ENCODE measurements at regions of chr19 and their contacts with region 1.

Region 1: DNA sequence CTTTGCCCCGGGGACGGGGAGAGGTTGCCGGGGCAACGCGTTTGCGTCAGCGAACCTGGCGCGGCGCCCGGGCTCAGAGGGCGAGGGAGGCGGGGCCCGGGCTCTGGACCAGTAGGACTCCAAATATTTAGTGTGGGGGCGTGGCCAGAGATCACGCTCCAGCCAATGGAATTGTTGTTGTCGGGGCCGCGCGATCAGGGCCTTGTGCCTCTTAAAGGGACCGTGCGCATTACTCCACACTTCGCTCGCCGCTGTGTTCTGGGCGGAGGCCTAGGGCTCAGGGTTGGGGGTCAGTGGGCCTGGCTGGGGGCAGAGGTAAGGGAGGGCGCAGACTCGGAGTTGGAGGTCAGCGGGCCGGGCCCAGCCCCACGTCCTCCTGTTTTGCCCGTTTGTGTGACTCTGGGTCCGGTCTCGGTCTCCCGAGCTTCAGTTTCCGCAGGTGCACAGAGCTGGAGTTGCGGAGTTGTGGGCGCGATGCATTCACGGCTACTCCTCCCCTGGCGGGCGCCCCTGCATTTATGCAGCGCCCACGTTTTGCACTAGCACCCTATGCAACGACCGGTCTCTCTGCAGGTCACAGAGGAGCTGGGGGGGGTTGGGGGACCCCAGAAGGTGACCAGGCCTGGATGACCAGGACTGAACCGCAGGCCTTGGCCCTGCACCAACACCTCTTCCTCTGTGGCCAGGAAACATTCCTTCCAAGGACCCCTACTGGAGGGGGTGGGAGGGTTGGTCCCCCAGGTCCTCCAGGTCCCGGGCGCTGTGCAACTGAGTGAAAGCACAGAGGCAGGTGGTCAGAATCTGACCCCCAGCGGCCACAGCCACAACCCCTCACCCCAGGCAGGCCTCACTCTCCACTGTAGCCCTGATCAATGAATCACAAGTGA is 10.7 kb upstream of the MKNK2 start:
- DNase-seq: peak; percentile 97
- ATAC-seq: peak; percentile 65
- H3K4me3 ChIP-seq: peak overlapping the region; percentile 58 to 86 (median 76)
- H3K27ac ChIP-seq: peak overlapping the region; percentile 100
- H3K4me1 ChIP-seq: peaks cover 80% of the 10 kb centered on the region
- H3K27me3 ChIP-seq: no peaks in the 10 kb centered on the region; a peak in 1 of 5 replicates
- CTCF ChIP-seq: peak; percentile 78
- EP300 ChIP-seq: peak; percentile 39 to 53; a peak in 3 of 4 replicates
- POLR2A ChIP-seq: peak; percentile 77 to 87
- RAD21 ChIP-seq: peak; percentile 40

Region 2: DNA sequence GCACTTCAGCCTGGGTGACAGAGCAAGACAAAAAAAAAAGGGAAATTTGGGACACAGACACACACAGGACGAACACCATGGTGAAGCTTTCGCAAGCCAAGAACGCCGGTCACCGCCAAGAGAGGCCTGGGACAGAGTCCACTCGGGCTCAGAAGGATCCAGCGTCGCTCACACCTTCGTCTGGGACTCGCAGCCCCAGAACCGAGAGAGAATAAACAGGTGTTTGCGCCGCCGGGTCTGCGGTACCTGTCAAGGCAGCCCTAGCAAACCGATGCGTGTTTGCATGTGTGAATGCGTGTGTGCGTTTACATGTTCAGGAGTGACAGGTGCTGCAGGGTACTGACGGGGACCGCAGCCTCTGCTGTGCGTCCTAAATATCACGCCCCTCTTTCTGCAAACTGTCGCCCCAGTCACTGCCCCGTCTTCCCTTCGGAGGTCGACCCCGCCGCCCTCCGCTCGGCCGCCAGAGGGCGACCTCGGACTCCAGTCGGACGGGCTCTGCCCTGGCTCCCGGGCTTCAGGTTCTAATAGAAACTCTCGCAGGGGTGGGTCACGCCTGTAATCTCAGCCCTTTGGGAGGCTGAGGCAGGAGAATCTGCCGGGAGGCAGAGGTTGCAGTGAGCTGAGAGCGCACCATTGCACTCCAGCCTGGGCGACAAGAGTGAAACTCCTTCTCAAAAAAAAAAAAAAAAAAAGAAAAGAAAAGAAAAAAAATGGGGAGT is 132.6 kb before region 1 on chr19:
- CTCF ChIA-PET with region 1: no interaction called
- POLR2A ChIA-PET with region 1: no interaction called
- in situ Hi-C with region 1: loop called (anchors 10 kb)
- intact Hi-C with region 1: loop called (anchors 5 kb)
- DNase-seq: peak; percentile 65
- ATAC-seq: peak; percentile 89
- H3K4me3 ChIP-seq: peak overlapping the region; percentile 48 to 71 (median 49)
- H3K27ac ChIP-seq: no peak overlapping the region
- H3K4me1 ChIP-seq: peaks cover 7% of the 10 kb centered on the region
- H3K27me3 ChIP-seq: no peaks in the 10 kb centered on the region
- CTCF ChIP-seq: peak; percentile 93
- EP300 ChIP-seq: no peak
- POLR2A ChIP-seq: no peak
- RAD21 ChIP-seq: peak; percentile 80

Region 3: GRCh38 chr19:1935484-1936208 is 126.1 kb before region 1 on chr19:
- CTCF ChIA-PET with region 1: no interaction called
- POLR2A ChIA-PET with region 1: interaction called, 3 read pairs
- in situ Hi-C with region 1: loop called (anchors 10 kb)
- intact Hi-C with region 1: no loop called
- DNase-seq: peak; percentile 62
- ATAC-seq: peak; percentile 59
- H3K4me3 ChIP-seq: peak overlapping the region in 1 of 3 experiments; percentile 51; a peak in 2 of 6 replicates
- H3K27ac ChIP-seq: peak overlapping the region; percentile 16
- H3K4me1 ChIP-seq: peaks cover 38% of the 10 kb centered on the region
- H3K27me3 ChIP-seq: no peaks in the 10 kb centered on the region
- CTCF ChIP-seq: no peak
- EP300 ChIP-seq: no peak
- POLR2A ChIP-seq: no peak
- RAD21 ChIP-seq: no peak

Region 4: GRCh38 chr19:2016041-2016807 is 45.5 kb before region 1 on chr19:
- CTCF ChIA-PET with region 1: interaction called, 5 read pairs
- POLR2A ChIA-PET with region 1: interaction called, 11 read pairs
- in situ Hi-C with region 1: loop called (anchors 5 kb)
- intact Hi-C with region 1: no loop called
- DNase-seq: peak; percentile 63
- ATAC-seq: peak; percentile 55
- H3K4me3 ChIP-seq: peak overlapping the region in 2 of 3 experiments; percentile 26 to 59; a peak in 3 of 6 replicates
- H3K27ac ChIP-seq: no peak overlapping the region
- H3K4me1 ChIP-seq: peaks cover 23% of the 10 kb centered on the region
- H3K27me3 ChIP-seq: no peaks in the 10 kb centered on the region
- CTCF ChIP-seq: no peak
- EP300 ChIP-seq: no peak
- POLR2A ChIP-seq: no peak
- RAD21 ChIP-seq: no peak

Region 5: DNA sequence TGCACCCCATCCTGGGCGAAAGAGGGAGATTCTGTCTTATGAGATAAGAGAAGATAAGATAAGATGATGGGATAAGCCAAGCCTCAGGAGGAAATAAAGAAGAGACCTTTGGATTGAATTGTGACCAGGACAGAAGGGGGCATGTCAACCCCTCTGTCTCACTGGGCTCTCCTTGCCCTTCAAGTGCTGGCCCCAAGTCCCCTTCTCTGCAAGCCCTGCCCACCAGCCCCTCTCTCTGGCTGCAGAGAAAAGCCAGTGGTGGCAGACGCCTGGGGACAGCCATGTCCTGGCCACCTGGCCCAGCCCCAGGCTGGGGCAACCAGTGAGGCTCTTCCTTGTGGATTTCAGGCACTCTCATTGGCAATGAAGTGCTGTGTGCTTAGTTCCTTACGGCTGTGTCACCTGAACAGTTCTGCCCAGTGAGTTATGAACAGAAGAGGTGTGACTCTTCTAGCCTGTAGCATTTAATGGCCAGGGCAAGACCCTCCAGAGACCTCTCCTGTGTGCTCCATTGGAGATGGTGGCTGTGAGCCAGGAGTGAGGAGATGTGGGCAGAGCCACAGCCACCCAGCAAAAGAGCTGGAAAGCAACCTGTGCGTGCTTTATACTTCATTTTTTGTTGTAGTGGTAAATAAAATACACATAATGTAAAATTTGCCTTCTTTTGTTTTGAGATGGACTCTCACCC is 40.1 kb before region 1 on chr19:
- CTCF ChIA-PET with region 1: interaction called, 5 read pairs
- POLR2A ChIA-PET with region 1: interaction called, 11 read pairs
- in situ Hi-C with region 1: loop called (anchors 5 kb)
- intact Hi-C with region 1: no loop called
- DNase-seq: no peak
- ATAC-seq: no peak
- H3K4me3 ChIP-seq: no peak overlapping the region
- H3K27ac ChIP-seq: no peak overlapping the region
- H3K4me1 ChIP-seq: peaks cover 7% of the 10 kb centered on the region
- H3K27me3 ChIP-seq: no peaks in the 10 kb centered on the region
- CTCF ChIP-seq: no peak
- EP300 ChIP-seq: no peak
- POLR2A ChIP-seq: no peak
- RAD21 ChIP-seq: no peak

Region 6: GRCh38 chr19:2050991-2051772 is 10.6 kb before region 1 on chr19 and contains the start of gene MKNK2:
- CTCF ChIA-PET with region 1: no interaction called
- POLR2A ChIA-PET with region 1: interaction called, 40 read pairs
- in situ Hi-C with region 1: no loop called
- intact Hi-C with region 1: no loop called
- DNase-seq: peak; percentile 64
- ATAC-seq: peak; percentile 47
- H3K4me3 ChIP-seq: peak within 1 kb of the TSS; percentile 92 to 94 (median 93)
- H3K27ac ChIP-seq: peak within 1 kb of the TSS; percentile 63
- H3K4me1 ChIP-seq: peaks cover 79% of the 10 kb centered on the region
- H3K27me3 ChIP-seq: no peaks in the 10 kb centered on the region
- CTCF ChIP-seq: peak; percentile 88
- EP300 ChIP-seq: no peak
- POLR2A ChIP-seq: peak; percentile 95 to 98
- RAD21 ChIP-seq: peak; percentile 71
- total RNA-seq, gene MKNK2: 35.5 and 44.9 TPM in 2 replicates

Region 7: GRCh38 chr19:2123682-2124387 is 62.1 kb after region 1 on chr19:
- CTCF ChIA-PET with region 1: no interaction called
- POLR2A ChIA-PET with region 1: no interaction called
- in situ Hi-C with region 1: no loop called
- intact Hi-C with region 1: no loop called
- DNase-seq: no peak
- ATAC-seq: no peak
- H3K4me3 ChIP-seq: no peak overlapping the region
- H3K27ac ChIP-seq: no peak overlapping the region
- H3K4me1 ChIP-seq: no peaks in the 10 kb centered on the region
- H3K27me3 ChIP-seq: no peaks in the 10 kb centered on the region
- CTCF ChIP-seq: no peak
- EP300 ChIP-seq: no peak
- POLR2A ChIP-seq: no peak
- RAD21 ChIP-seq: no peak

Region 8: DNA sequence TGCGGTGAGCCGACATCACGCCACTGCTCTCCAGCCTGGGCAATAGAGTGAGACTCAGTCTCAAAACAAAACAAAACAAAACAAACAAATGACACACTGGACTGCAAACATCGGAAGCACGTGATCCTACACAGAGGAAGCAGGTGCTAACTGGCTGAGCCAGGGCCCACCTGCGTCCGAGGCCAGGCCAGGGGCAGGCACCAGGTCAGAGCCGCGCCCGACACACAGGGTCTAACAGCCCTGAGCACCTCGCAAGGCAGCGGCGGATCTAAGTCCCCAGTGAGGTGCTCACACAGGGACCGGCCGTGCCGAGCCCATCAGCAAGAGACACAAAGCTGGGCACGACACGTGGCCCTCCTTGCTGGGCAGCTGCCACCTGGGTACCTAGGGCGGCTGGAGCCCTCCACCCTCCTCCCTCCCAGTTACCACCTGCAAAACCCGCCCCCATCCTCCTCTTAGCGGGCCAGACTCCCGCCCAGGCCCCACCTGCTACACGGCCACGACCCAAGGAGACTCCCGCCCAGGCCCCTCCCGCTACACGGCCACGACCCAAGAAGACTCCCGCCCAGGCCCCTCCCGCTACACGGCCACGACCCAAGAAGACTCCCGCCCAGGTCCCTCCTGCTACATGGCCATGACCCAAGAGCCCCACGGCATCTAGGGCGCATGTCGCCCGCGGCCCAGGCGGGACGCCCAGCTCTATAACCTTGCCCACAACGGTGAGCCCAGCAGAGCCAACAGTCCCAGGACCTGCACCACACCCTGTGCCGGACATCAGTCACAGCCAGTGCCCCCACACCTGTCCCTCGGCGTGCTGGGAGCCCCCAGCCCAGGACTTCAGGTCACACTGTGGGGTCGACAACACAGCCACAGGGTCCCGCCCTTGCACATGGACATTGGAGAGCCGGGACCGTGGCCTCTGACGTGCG is 74.0 kb after region 1 on chr19:
- CTCF ChIA-PET with region 1: no interaction called
- POLR2A ChIA-PET with region 1: no interaction called
- in situ Hi-C with region 1: no loop called
- intact Hi-C with region 1: no loop called
- DNase-seq: no peak
- ATAC-seq: no peak; the same call in 1 of the 3 replicates
- H3K4me3 ChIP-seq: no peak overlapping the region
- H3K27ac ChIP-seq: no peak overlapping the region
- H3K4me1 ChIP-seq: no peaks in the 10 kb centered on the region
- H3K27me3 ChIP-seq: no peaks in the 10 kb centered on the region
- CTCF ChIP-seq: no peak
- EP300 ChIP-seq: no peak
- POLR2A ChIP-seq: no peak
- RAD21 ChIP-seq: no peak